ENCODE measurements at regions of chr6 and their contacts with region 1.

Region 1: DNA sequence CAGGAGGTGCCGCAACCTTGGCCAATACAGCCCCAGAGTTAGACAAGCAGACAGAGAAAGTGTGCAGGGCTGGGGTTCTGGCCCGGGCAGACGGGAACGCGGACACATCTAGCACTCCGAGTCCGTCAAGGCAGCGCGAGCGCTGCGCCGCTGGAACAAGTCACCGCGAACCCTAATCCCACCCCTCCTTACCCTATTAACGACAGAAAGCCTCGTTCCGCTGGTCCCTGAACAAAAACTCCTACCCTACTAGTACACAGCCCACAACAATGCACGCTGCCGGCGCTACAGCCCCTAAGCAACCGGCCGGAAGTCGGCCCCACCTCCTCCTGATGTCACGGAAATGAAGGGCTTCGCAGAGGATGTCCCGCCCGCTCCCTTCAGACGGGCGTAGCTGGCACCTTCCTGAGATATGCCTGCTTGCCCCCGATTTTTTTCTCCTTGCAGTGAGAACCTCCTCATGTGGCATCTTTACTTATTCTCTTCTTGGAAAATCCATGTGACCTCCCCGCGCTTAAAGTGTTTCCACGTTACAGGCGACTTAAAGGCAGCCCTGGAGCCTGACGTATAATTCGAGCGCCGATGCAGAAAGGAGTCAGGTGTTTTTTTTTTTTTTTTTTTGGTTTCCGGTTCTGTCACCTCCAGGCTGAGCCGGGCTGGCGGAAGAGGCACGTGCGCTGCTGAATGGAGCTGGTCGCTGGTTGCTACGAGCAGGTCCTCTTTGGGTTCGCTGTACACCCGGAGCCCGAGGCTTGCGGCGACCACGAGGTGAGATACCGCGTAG is at the starts of genes C6orf52 and PAK1IP1:
- DNase-seq: peak; percentile 85 to 97 (median 90)
- ATAC-seq: peak; percentile 92
- H3K4me3 ChIP-seq: peak within 1 kb of the TSS; percentile 95
- H3K4me3 Mint-ChIP-seq: peak within 1 kb of the TSS; percentile 92
- H3K27ac ChIP-seq: peak within 1 kb of the TSS; percentile 97 to 99
- H3K27ac Mint-ChIP-seq: peak within 1 kb of the TSS; percentile 100
- H3K4me1 ChIP-seq: peaks cover 25% of the 10 kb centered on the region
- H3K4me1 Mint-ChIP-seq: peaks cover 41% of the 10 kb centered on the region
- H3K27me3 ChIP-seq: no peaks in the 10 kb centered on the region
- H3K27me3 Mint-ChIP-seq: no peaks in the 10 kb centered on the region
- CTCF ChIP-seq: no peak
- total RNA-seq, gene C6orf52: not detected
- total RNA-seq, gene PAK1IP1: 4.1 to 5.8 TPM

Region 2: DNA sequence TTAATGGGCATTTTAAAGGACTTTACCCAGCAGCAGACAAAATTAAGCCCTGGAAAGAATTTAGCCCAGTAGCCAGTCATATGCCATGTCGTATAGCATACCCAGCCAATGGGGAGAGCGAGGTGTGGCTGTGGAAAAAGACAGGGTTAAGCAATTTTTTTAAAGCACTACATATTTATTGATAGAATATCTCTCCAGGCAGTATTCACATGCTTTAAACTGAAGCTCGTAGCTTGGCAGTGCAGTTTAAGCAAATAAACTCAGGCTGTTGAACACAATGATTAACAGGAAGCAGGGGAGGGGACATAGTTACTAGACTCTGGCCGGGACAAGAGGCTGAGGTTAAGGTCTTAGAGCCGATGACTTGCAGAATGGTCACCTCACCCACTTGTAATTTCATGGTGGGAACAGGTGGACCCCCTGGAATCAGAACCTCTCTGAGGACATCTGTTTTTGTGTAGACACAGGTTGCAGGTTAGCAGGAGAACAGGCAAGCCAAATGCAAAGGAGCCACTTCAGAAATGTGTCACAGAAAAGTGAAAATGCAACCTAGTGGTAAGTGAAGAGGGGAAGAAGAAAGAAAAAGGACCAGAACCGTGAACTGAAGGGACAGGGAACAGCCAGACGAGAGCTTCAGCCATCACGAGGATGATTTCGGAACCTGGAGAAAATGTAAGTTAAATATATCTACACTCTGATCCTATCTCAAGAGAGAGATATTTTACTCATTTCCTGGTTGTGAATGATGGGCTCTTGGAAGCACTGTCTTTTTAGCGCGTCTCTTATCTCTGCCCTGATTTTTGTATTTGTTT is 166.1 kb before region 1 on chr6:
- CTCF ChIA-PET with region 1: no interaction called
- POLR2A ChIA-PET with region 1: interaction called, 11 read pairs
- intact Hi-C with region 1: no loop called
- DNase-seq: peak in 8 of 14 experiments; percentile 2 to 44 (median 18)
- ATAC-seq: peak; percentile 64
- H3K4me3 ChIP-seq: peak overlapping the region; percentile 69
- H3K4me3 Mint-ChIP-seq: peak overlapping the region; percentile 91
- H3K27ac ChIP-seq: peak overlapping the region in 1 of 2 donors; percentile 65
- H3K27ac Mint-ChIP-seq: peak overlapping the region; percentile 83
- H3K4me1 ChIP-seq: peaks cover 35% of the 10 kb centered on the region
- H3K4me1 Mint-ChIP-seq: peaks cover 42% of the 10 kb centered on the region
- H3K27me3 ChIP-seq: no peaks in the 10 kb centered on the region
- H3K27me3 Mint-ChIP-seq: no peaks in the 10 kb centered on the region
- CTCF ChIP-seq: no peak

Region 3: GRCh38 chr6:10722820-10723566 is 28.5 kb after region 1 on chr6 and contains the start of gene TMEM14C:
- CTCF ChIA-PET with region 1: interaction called, 3 read pairs
- POLR2A ChIA-PET with region 1: interaction called, 82 read pairs
- intact Hi-C with region 1: loop called (anchors 2 kb)
- DNase-seq: peak; percentile 44 to 91 (median 78)
- ATAC-seq: peak; percentile 57
- H3K4me3 ChIP-seq: peak within 1 kb of the TSS; percentile 76
- H3K4me3 Mint-ChIP-seq: peak within 1 kb of the TSS; percentile 95
- H3K27ac ChIP-seq: peak within 1 kb of the TSS; percentile 37 to 73
- H3K27ac Mint-ChIP-seq: peak within 1 kb of the TSS; percentile 92
- H3K4me1 ChIP-seq: peaks cover 40% of the 10 kb centered on the region
- H3K4me1 Mint-ChIP-seq: peaks cover 69% of the 10 kb centered on the region
- H3K27me3 ChIP-seq: no peaks in the 10 kb centered on the region
- H3K27me3 Mint-ChIP-seq: no peaks in the 10 kb centered on the region
- CTCF ChIP-seq: no peak
- total RNA-seq, gene TMEM14C: 14.4 to 14.6 TPM

Region 4: GRCh38 chr6:10771371-10771894 is 76.9 kb after region 1 on chr6:
- CTCF ChIA-PET with region 1: no interaction called
- POLR2A ChIA-PET with region 1: no interaction called
- intact Hi-C with region 1: no loop called
- DNase-seq: no peak
- ATAC-seq: no peak
- H3K4me3 ChIP-seq: no peak overlapping the region
- H3K4me3 Mint-ChIP-seq: no peak overlapping the region
- H3K27ac ChIP-seq: no peak overlapping the region
- H3K27ac Mint-ChIP-seq: no peak overlapping the region
- H3K4me1 ChIP-seq: no peaks in the 10 kb centered on the region
- H3K4me1 Mint-ChIP-seq: no peaks in the 10 kb centered on the region
- H3K27me3 ChIP-seq: no peaks in the 10 kb centered on the region
- H3K27me3 Mint-ChIP-seq: no peaks in the 10 kb centered on the region
- CTCF ChIP-seq: no peak

Region 5: DNA sequence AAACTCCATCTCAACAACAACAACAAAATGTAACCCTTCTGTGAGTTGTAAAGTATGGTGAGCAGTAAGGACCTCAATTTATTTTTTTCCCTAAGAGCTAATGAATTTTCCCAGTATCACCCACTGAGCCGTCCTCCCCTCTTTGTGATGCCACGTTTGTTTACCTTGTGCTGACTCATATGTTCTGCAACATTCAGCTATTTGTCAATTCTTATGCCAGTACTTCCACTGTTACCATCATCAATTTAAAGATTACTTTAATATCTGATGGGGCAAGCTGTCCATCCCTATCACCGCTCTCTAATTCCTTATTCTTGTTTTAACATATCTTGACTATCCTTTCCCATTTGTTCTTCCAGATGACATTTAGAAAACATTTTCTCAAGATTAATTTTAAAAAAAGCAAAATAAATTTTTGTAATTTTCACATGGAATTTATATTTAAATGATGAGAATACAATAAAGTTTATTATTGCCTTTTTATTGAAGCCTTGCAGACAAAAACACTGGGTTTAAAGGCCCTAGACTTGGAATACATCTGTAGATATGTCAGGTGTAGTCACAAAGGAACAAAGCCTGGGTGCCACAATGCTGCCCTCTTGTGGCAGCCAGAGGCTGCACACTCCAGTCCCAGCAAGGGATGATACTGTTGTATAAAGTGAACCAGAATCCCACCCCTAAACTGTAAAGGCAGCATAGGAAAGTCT is 106.5 kb after region 1 on chr6:
- CTCF ChIA-PET with region 1: no interaction called
- POLR2A ChIA-PET with region 1: no interaction called
- intact Hi-C with region 1: loop called in 1 of 2 experiments (anchors 5 kb)
- DNase-seq: peak; percentile 34 to 76 (median 54)
- ATAC-seq: peak; percentile 81
- H3K4me3 ChIP-seq: no peak overlapping the region
- H3K4me3 Mint-ChIP-seq: no peak overlapping the region
- H3K27ac ChIP-seq: no peak overlapping the region
- H3K27ac Mint-ChIP-seq: no peak overlapping the region
- H3K4me1 ChIP-seq: no peaks in the 10 kb centered on the region
- H3K4me1 Mint-ChIP-seq: no peaks in the 10 kb centered on the region
- H3K27me3 ChIP-seq: no peaks in the 10 kb centered on the region
- H3K27me3 Mint-ChIP-seq: no peaks in the 10 kb centered on the region
- CTCF ChIP-seq: peak; percentile 99

Region 6: GRCh38 chr6:10933126-10933525 is 238.6 kb after region 1 on chr6:
- CTCF ChIA-PET with region 1: no interaction called
- POLR2A ChIA-PET with region 1: no interaction called
- intact Hi-C with region 1: no loop called
- DNase-seq: no peak
- ATAC-seq: no peak
- H3K4me3 ChIP-seq: no peak overlapping the region
- H3K4me3 Mint-ChIP-seq: no peak overlapping the region
- H3K27ac ChIP-seq: no peak overlapping the region
- H3K27ac Mint-ChIP-seq: no peak overlapping the region
- H3K4me1 ChIP-seq: no peaks in the 10 kb centered on the region
- H3K4me1 Mint-ChIP-seq: no peaks in the 10 kb centered on the region
- H3K27me3 ChIP-seq: peaks cover 0 to 4% of the 10 kb centered on the region in 2 experiments
- H3K27me3 Mint-ChIP-seq: peaks cover 41% of the 10 kb centered on the region
- CTCF ChIP-seq: no peak

Region 7: DNA sequence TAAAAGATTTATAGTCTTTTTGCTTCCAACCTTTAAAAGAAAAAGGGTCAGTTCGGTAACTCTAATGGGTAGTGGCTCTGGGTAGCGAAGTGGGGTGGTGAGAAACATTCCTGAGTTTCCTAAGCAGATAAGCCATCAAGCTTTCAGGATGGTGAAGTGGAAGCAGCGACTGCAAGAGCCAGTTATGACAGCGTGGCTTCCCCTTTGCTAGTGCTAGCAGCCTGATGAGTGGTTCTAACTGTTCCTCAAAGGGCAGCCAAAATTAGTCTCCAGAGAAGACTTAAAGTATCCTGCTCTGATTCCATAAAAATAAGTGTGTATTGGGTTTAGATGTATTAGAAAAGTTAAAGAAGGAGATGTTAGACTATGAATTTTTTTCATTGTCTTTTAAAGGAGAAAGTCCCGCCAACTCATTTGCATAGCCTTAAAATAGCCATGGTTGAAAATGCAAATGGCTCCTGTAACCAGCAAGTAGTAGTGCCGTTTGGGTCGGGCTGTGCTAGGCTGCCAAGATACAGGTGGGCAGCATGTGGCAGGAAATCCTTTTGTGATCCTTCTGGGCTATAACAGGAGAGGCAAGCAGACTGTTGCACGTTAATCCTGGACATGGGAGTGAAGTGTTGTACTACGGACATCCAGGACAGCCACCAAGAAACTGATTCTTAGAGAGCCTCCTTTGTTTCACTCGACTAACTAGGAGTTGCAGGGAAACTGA is 331.6 kb after region 1 on chr6:
- CTCF ChIA-PET with region 1: no interaction called
- POLR2A ChIA-PET with region 1: no interaction called
- intact Hi-C with region 1: no loop called
- DNase-seq: no peak
- ATAC-seq: no peak
- H3K4me3 ChIP-seq: no peak overlapping the region
- H3K4me3 Mint-ChIP-seq: no peak overlapping the region
- H3K27ac ChIP-seq: no peak overlapping the region
- H3K27ac Mint-ChIP-seq: no peak overlapping the region
- H3K4me1 ChIP-seq: no peaks in the 10 kb centered on the region
- H3K4me1 Mint-ChIP-seq: no peaks in the 10 kb centered on the region
- H3K27me3 ChIP-seq: peaks cover 0 to 23% of the 10 kb centered on the region in 2 experiments
- H3K27me3 Mint-ChIP-seq: peaks cover 58% of the 10 kb centered on the region
- CTCF ChIP-seq: no peak

Region 8: DNA sequence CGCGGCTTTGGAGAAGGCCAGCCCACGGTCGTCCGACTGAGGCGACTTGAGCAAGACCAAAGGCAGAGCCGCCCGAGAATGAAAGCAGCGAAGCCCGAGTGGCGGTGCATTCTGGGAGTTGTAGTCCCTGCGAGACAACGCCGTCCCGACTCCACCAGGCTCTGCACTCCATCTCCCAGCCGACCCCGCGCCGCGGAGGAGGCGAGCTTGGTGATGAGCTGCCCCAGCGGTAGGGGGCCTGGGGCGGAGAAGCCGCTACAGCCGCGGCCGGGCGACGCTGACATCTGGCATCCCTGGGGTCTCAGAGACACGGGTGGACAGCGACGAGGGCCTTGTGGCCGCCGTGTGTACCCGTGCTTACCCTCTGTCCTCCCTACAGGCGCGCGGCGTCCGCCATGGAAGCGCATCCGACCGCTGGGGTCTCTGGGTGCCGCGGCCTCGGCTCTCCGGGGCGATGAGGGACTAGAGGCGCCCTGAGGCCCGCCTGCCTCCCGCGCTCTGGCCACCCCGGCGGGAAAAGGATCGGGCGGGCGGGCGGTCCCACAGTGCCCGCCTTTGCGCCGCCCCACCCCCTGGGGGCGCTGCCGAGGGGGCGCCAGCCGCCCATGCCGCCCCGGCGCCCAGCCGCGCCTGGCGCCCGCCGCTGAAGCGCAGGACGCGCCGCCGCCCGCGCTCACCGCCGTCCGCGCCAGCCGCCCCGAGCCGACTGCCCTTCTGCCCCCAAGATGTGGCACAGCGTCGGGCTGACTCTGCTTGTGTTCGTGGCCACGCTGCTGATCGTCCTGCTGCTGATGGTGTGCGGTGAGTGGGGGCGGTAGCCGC is 399.3 kb after region 1 on chr6 and contains the start of gene SMIM13:
- CTCF ChIA-PET with region 1: no interaction called
- POLR2A ChIA-PET with region 1: interaction called, 5 read pairs
- intact Hi-C with region 1: loop called (anchors 2 to 10 kb)
- DNase-seq: peak; percentile 88 to 97 (median 94)
- ATAC-seq: peak; percentile 92
- H3K4me3 ChIP-seq: peak within 1 kb of the TSS; percentile 83
- H3K4me3 Mint-ChIP-seq: peak within 1 kb of the TSS; percentile 97
- H3K27ac ChIP-seq: peak within 1 kb of the TSS; percentile 87 to 92
- H3K27ac Mint-ChIP-seq: peak within 1 kb of the TSS; percentile 97
- H3K4me1 ChIP-seq: peaks cover 20% of the 10 kb centered on the region
- H3K4me1 Mint-ChIP-seq: peaks cover 29% of the 10 kb centered on the region
- H3K27me3 ChIP-seq: no peaks in the 10 kb centered on the region
- H3K27me3 Mint-ChIP-seq: no peaks in the 10 kb centered on the region
- CTCF ChIP-seq: peak; percentile 74
- total RNA-seq, gene SMIM13: 3.0 to 4.6 TPM

Measured in CD4-positive, alpha-beta T cell (primary cell).